ENCODE measurements at regions of chr12 and their contacts with region 1.

Region 1: GRCh38 chr12:22670762-22671161 is 45.8 kb downstream of the ETNK1 start:
- DNase-seq: no peak
- ATAC-seq: no peak
- H3K4me3 ChIP-seq: no peak overlapping the region
- H3K27ac ChIP-seq: no peak overlapping the region
- H3K4me1 ChIP-seq: no peaks in the 10 kb centered on the region
- H3K27me3 ChIP-seq: no peaks in the 10 kb centered on the region
- CTCF ChIP-seq: no peak
- EP300 ChIP-seq: no peak
- POLR2A ChIP-seq: no peak
- RAD21 ChIP-seq: no peak

Region 2: GRCh38 chr12:22529281-22530060 is 141.3 kb before region 1 on chr12:
- CTCF ChIA-PET with region 1: interaction called, 4 read pairs
- POLR2A ChIA-PET with region 1: no interaction called
- in situ Hi-C with region 1: no loop called
- intact Hi-C with region 1: loop called (anchors 1 kb)
- DNase-seq: peak; percentile 59
- ATAC-seq: peak; percentile 87
- H3K4me3 ChIP-seq: no peak overlapping the region
- H3K27ac ChIP-seq: no peak overlapping the region
- H3K4me1 ChIP-seq: no peaks in the 10 kb centered on the region
- H3K27me3 ChIP-seq: no peaks in the 10 kb centered on the region
- CTCF ChIP-seq: peak; percentile 53
- EP300 ChIP-seq: no peak
- POLR2A ChIP-seq: no peak
- RAD21 ChIP-seq: no peak

Measured in HepG2 (cell line).